Activated CD8-positive, alpha-beta memory T cell treated with anti-CD3 and anti-CD28 coated beads, Interleukin-2, amount 10 ng/mL, durations not matched to agents 7 days and 5 days (primary cell): ENCODE measurements at regions of chr2 and their contacts with region 1.

Region 1: DNA sequence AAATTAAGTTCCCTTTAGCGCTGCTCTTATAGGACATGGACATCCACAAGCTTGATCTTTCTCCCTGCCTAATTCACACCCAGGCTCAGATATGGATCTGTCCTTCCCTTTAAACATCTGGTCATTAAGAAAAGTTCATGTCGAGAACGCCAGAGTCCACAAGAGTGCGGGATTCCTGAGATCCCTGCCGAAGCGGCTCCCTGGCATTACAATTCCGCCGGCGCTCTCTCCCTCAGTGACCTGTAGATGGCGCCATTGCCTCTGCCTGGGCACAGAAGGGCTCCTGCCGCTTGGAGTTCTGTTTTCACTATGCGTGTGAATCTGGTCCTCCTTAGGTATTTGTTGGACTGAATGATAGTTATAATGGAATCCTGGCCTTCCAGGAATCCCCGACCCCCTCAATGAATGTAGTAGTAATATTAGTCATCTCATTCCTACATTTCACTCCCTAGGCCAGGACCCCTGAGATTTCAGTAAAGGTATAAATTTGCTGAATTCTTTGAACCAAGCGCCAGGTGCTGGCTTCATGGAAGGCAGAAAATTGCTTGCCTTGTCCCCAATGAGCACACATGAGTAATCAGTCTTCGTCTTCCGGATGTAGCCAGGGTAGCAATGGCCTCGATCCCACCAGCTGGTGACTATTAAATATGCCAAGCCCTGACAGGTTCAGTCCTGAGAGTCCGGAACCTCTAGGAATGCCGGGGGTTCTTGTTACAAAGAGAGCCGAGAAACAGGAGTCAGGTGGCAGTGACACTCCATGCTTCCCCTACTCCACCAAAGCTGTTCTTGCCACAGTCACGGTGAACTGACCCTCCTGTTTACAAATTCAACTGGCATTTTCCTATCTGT is 26.4 kb upstream of the CD207 start:
- DNase-seq: peak; percentile 76
- ATAC-seq: peak; percentile 73
- H3K4me3 Mint-ChIP-seq: no peak overlapping the region
- H3K27ac Mint-ChIP-seq: no peak overlapping the region
- H3K4me1 Mint-ChIP-seq: peaks cover 5% of the 10 kb centered on the region
- H3K27me3 Mint-ChIP-seq: peaks cover 62% of the 10 kb centered on the region

Region 2: GRCh38 chr2:70851704-70852103 is 10.3 kb before region 1 on chr2:
- CTCF ChIA-PET with region 1: interaction called, 13 read pairs
- DNase-seq: peak; percentile 68
- ATAC-seq: peak; percentile 96
- H3K4me3 Mint-ChIP-seq: peak overlapping the region; percentile 23
- H3K27ac Mint-ChIP-seq: peak overlapping the region; percentile 84
- H3K4me1 Mint-ChIP-seq: peaks cover 33% of the 10 kb centered on the region
- H3K27me3 Mint-ChIP-seq: peaks cover 12% of the 10 kb centered on the region

Region 3: GRCh38 chr2:71122387-71123298 is 260.6 kb after region 1 on chr2:
- CTCF ChIA-PET with region 1: no interaction called
- DNase-seq: no peak
- ATAC-seq: no peak
- H3K4me3 Mint-ChIP-seq: no peak overlapping the region
- H3K27ac Mint-ChIP-seq: no peak overlapping the region
- H3K4me1 Mint-ChIP-seq: peaks cover 2% of the 10 kb centered on the region
- H3K27me3 Mint-ChIP-seq: no peaks in the 10 kb centered on the region